Left lung (tissue), 14 donors: ENCODE measurements at regions of chr1 and their contacts with region 1.

Region 1: GRCh38 chr1:40951943-40952743 is 27.4 kb upstream of the CTPS1 start:
- DNase-seq: peak; percentile 50 to 90 (median 70)
- ATAC-seq: peak; percentile 87
- H3K4me3 ChIP-seq: no peak overlapping the region
- H3K27ac ChIP-seq: no peak overlapping the region
- H3K4me1 ChIP-seq: peaks cover 0 to 22% of the 10 kb centered on the region in 2 donors
- H3K27me3 ChIP-seq: no peaks in the 10 kb centered on the region
- CTCF ChIP-seq: peak; percentile 86 to 95

Region 2: GRCh38 chr1:40849801-40850592 is 102.1 kb before region 1 on chr1:
- intact Hi-C with region 1: loop called in 1 of 2 experiments (anchors 5 kb)
- DNase-seq: peak; percentile 56 to 88 (median 65)
- ATAC-seq: peak; percentile 92
- H3K4me3 ChIP-seq: no peak overlapping the region
- H3K27ac ChIP-seq: no peak overlapping the region
- H3K4me1 ChIP-seq: peaks cover 0 to 10% of the 10 kb centered on the region in 2 donors
- H3K27me3 ChIP-seq: no peaks in the 10 kb centered on the region
- CTCF ChIP-seq: peak; percentile 88 to 95